ENCODE measurements at regions of chr14 and their contacts with region 1.

Region 1: GRCh38 chr14:68548194-68549056 is 244.4 kb downstream of the ZFP36L1 start:
- DNase-seq: peak; percentile 98
- H3K4me3 ChIP-seq: no peak overlapping the region
- H3K27ac ChIP-seq: peak overlapping the region; percentile 93 to 96 (median 96)
- H3K4me1 ChIP-seq: peaks cover 0 to 98% (median 86%) of the 10 kb centered on the region in 4 donors
- H3K27me3 ChIP-seq: no peaks in the 10 kb centered on the region
- CTCF ChIP-seq: no peak
- EP300 ChIP-seq: peak; percentile 96 to 99 (median 98)
- POLR2A ChIP-seq: peak in 1 of 2 donors; percentile 3

Region 2: GRCh38 chr14:68039593-68039992 is 508.8 kb before region 1 on chr14:
- intact Hi-C with region 1: loop called (anchors 5 kb)
- DNase-seq: no peak
- H3K4me3 ChIP-seq: no peak overlapping the region
- H3K27ac ChIP-seq: peak overlapping the region; percentile 22 to 90 (median 85)
- H3K4me1 ChIP-seq: peaks cover 0 to 92% (median 61%) of the 10 kb centered on the region in 4 donors
- H3K27me3 ChIP-seq: no peaks in the 10 kb centered on the region
- CTCF ChIP-seq: no peak
- EP300 ChIP-seq: no peak
- POLR2A ChIP-seq: no peak

Region 3: DNA sequence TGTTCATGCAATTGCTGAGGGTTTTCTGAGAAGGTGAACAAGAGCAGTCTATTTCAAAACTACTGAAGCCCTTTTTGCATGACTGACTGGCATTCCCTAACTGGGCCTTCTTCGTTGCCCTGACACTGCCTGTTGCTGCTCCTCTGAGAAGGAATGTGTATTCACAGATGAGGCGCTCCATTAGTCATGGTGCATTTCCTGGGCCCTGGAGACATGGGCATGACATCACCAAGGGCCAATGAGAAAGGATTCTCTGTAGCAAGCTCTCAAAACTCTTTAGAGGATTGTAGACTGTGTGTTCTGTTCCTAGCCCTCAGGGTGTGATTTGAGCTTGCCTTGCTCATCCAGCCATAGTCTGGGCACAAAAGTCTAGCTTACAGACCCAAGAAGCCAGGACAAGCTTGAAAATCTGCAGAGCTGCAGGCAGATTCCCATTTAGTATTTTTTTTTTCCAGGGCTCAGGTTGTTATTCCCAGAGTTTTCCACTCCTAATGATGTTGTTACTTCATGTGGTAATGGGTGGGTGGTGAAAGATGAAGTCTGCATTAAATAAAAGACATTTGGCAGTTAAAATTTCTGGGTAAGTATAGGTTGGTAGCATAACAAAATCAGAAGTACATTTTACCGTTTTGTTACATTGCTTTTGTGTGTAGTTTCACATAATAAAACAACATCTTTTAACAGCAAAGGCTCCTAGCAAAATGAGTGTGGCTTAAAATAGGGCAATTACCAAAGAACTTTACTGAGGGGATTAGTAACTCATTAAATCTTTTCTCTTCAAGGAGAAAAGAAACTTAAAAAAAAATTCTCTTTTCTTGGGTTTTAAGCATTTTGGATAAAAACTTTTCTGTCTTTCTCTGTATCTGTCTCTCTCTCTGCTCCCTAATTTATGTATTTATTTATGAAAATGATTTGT is 410.5 kb before region 1 on chr14:
- intact Hi-C with region 1: loop called (anchors 5 kb)
- DNase-seq: peak; percentile 81
- H3K4me3 ChIP-seq: no peak overlapping the region
- H3K27ac ChIP-seq: peak overlapping the region; percentile 86 to 92 (median 88)
- H3K4me1 ChIP-seq: peaks cover 0 to 72% (median 60%) of the 10 kb centered on the region in 4 donors
- H3K27me3 ChIP-seq: no peaks in the 10 kb centered on the region
- CTCF ChIP-seq: no peak
- EP300 ChIP-seq: no peak
- POLR2A ChIP-seq: no peak

Region 4: DNA sequence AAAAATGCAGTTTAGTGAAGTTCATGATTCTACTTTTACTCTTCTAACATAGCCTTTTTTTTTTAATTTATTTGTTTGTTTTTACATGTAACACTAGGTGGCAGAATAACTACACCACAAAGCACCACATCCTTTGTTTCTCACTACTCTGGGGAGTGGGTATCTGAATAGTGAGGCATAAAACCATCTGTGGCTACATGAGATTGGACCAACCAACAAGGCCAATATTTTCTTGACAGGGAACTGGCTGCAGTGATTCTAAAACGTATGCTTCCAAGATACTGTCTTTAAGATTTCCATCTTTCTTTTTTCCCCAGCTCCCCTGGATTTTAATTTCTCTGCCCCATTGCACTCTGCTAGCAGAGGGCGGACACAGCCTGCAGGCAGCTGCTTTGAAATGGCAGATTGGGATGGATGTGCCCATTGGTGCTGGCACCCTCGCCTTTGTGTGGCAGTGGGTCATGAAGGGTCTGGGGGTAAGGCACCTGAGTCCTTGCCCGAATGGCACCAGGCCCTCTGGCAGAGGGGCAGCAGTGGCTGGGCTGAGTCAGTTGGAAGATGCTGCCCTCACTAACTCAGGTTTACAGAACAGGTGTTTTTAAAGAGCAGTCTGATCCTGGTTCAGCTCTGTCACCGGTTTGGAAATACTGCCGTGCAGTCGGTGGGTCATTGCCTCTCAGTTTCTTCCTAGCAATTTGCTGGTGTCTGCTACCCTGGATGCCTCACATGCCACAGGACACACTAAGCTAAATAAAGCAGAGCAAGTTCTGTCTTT is 299.8 kb before region 1 on chr14:
- intact Hi-C with region 1: loop called (anchors 5 kb)
- DNase-seq: peak; percentile 77
- H3K4me3 ChIP-seq: no peak overlapping the region
- H3K27ac ChIP-seq: peak overlapping the region; percentile 81 to 90 (median 88)
- H3K4me1 ChIP-seq: peaks cover 0 to 93% (median 82%) of the 10 kb centered on the region in 4 donors
- H3K27me3 ChIP-seq: no peaks in the 10 kb centered on the region
- CTCF ChIP-seq: peak in 3 of 4 experiments; percentile 50 to 75 (median 66)
- EP300 ChIP-seq: peak in 1 of 4 donors; percentile 14
- POLR2A ChIP-seq: no peak

Region 5: GRCh38 chr14:68466491-68467032 is 81.9 kb before region 1 on chr14:
- intact Hi-C with region 1: no loop called
- DNase-seq: no peak
- H3K4me3 ChIP-seq: no peak overlapping the region
- H3K27ac ChIP-seq: peak overlapping the region; percentile 21 to 74 (median 60)
- H3K4me1 ChIP-seq: peaks cover 0 to 22% (median 16%) of the 10 kb centered on the region in 4 donors
- H3K27me3 ChIP-seq: no peaks in the 10 kb centered on the region
- CTCF ChIP-seq: no peak
- EP300 ChIP-seq: no peak
- POLR2A ChIP-seq: no peak

Region 6: DNA sequence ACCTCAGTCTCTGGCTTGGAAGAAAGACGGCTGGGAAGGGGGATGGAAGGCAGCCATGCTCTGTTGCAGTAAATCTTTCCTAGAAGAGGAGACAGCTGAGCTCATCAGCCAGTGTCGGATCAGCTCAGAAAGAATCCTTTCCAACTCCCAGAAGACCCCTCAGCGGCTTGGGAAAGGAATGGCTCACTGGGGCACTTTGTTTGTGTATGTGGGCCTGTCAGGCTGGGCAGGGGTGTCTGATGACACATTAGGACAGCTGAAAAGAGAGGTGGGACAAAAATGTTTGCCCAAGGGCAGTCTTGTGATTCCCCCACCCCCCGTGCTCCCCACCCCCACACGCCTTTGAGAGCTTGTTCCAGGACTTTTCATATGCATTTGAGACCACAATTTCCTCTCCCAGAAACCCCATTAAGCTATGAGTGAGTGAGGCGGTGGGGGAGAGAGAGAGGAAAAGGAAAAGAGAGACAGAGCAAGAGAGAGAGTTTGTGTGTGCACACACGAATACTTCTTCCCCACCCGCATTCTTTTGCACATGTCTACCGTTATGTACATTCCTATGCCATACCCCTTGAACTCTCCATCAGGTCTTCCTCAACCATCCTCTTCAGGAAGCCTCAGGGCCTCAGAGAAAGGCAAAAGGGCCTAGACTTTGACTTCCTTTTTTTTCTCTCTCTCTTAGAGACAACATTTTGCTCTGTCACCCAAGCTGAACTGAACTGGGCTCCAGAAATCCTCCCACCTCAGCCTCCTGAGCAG is 45.6 kb after region 1 on chr14:
- intact Hi-C with region 1: loop called (anchors 1 kb)
- DNase-seq: no peak
- H3K4me3 ChIP-seq: no peak overlapping the region
- H3K27ac ChIP-seq: peak overlapping the region in 2 of 4 donors; percentile 16 to 92
- H3K4me1 ChIP-seq: peaks cover 0 to 61% (median 43%) of the 10 kb centered on the region in 4 donors
- H3K27me3 ChIP-seq: no peaks in the 10 kb centered on the region
- CTCF ChIP-seq: no peak
- EP300 ChIP-seq: no peak
- POLR2A ChIP-seq: no peak

Region 7: GRCh38 chr14:68663385-68664076 is 115.1 kb after region 1 on chr14:
- intact Hi-C with region 1: loop called (anchors 5 kb)
- DNase-seq: peak; percentile 56
- H3K4me3 ChIP-seq: no peak overlapping the region
- H3K27ac ChIP-seq: peak overlapping the region; percentile 70 to 88 (median 81)
- H3K4me1 ChIP-seq: peaks cover 0 to 87% (median 73%) of the 10 kb centered on the region in 4 donors
- H3K27me3 ChIP-seq: no peaks in the 10 kb centered on the region
- CTCF ChIP-seq: no peak
- EP300 ChIP-seq: no peak
- POLR2A ChIP-seq: no peak

Measured in sigmoid colon (tissue), 7 donors.